Ascending aorta (tissue), 2 donors: ENCODE measurements at regions of chr3 and their contacts with region 1.

Region 1: DNA sequence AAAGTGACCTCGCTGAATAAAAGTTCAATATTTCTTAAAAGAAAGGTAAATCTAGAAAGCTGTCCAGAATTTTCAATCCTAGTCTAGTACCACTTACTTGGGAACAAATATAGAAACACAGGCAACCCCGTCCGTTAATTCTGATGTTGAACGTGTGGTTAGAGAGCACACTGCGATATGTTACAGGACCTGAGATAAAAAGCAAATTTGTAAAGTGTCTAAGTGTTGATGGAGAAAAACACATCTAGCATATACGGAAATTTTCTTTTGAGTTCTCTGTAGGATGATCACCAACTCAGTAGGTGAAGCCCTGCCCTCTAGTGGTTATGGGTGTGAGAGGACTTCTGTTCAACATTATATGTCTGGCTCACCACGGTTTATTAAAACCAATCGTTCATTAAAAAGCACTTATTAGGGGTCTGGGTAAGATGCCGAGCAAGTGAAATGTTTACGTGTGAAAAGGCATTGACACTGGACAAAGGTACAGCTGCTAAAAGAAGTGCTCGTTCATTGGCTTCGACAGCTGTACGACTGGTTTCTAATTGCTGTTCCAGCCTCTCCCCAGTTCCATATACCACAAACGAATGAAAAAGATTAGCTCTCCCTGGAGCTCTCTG is 1.0 kb upstream of the ATP2C1 start:
- DNase-seq: peak in 1 of 2 donors; percentile 82
- H3K4me3 ChIP-seq: peak overlapping the region; percentile 71 to 96
- H3K27ac ChIP-seq: peak overlapping the region; percentile 92 to 98
- H3K4me1 ChIP-seq: peaks cover 0 to 6% of the 10 kb centered on the region in 2 donors
- H3K27me3 ChIP-seq: no peaks in the 10 kb centered on the region
- CTCF ChIP-seq: peak; percentile 76 to 82 (median 76)

Region 2: GRCh38 chr3:130490241-130490640 is 402.6 kb before region 1 on chr3:
- intact Hi-C with region 1: no loop called
- DNase-seq: no peak
- H3K4me3 ChIP-seq: no peak overlapping the region
- H3K27ac ChIP-seq: no peak overlapping the region
- H3K4me1 ChIP-seq: no peaks in the 10 kb centered on the region
- H3K27me3 ChIP-seq: no peaks in the 10 kb centered on the region
- CTCF ChIP-seq: no peak

Region 3: GRCh38 chr3:130609166-130609979 is 283.5 kb before region 1 on chr3:
- intact Hi-C with region 1: no loop called
- DNase-seq: peak in 1 of 2 donors; percentile 65
- H3K4me3 ChIP-seq: no peak overlapping the region
- H3K27ac ChIP-seq: peak overlapping the region in 1 of 2 donors; percentile 53
- H3K4me1 ChIP-seq: peaks cover 0 to 2% of the 10 kb centered on the region in 2 donors
- H3K27me3 ChIP-seq: no peaks in the 10 kb centered on the region
- CTCF ChIP-seq: no peak

Region 4: DNA sequence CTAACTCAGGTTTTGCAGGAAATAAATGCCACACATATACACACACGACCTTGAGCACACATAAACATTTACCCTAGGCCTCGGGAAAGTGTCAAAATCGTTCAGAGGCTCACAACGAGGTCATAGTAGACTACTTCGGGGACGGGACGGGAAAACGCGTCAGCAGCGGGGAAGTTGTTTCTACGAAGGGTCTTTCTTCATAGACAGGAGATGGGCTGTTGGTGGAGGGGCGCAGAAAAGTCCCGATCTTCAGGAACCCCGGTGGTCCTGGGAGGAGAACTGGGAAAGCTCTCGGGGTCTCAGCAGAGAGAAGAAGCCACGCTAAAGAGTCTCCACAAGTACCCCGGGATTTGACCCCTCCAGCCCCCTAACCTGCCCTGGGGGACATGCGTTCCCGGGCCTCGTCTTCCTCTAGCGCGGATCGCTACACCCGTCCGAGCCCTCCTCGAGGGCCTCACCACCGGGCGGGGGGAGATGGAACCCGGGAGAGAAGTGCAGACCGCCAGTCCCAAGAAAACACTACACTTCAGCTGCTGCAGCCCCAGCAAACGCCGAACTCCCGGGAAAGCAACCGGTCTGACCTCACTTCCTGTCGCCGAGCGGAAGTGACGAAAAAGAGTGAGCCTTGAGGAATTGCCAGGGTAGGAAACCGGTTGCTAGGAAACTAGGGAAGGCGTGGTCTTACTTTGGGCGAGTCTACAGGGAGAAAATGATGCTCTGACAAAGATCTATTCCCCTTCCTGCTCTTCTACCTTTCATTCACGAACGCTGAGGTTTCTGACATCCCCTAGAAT is 146.4 kb before region 1 on chr3 and contains the start of gene PIK3R4:
- intact Hi-C with region 1: loop called (anchors 2 kb)
- DNase-seq: peak; percentile 93 to 98
- H3K4me3 ChIP-seq: peak within 1 kb of the TSS; percentile 83 to 95
- H3K27ac ChIP-seq: peak within 1 kb of the TSS; percentile 86 to 90
- H3K4me1 ChIP-seq: peaks cover 2 to 23% of the 10 kb centered on the region in 2 donors
- H3K27me3 ChIP-seq: no peaks in the 10 kb centered on the region
- CTCF ChIP-seq: no peak
- total RNA-seq, gene PIK3R4: 101 TPM

Region 5: DNA sequence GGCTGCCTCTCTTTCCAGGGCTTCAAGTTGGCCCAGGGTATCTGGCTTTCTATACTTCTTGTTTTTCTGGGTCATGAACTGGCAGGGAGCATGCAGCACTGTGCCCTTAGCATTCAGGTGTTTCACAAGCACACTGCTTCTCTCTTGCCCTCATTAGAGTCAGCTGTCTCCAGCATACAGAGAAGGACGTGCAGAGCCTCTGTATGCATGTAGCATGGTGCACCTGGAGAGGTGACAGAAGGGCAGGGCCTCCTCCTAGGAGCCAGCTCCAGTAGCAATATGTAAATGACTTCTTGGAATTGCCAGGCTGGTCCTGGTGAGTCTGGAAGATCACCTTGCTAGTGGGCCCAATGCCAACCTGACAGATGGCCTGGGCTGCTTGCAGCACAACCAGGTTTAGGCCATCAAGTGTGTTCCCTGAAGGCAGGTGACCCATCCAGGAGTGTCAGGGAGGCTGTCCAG is 43.7 kb before region 1 on chr3:
- intact Hi-C with region 1: no loop called
- DNase-seq: no peak
- H3K4me3 ChIP-seq: no peak overlapping the region
- H3K27ac ChIP-seq: no peak overlapping the region
- H3K4me1 ChIP-seq: no peaks in the 10 kb centered on the region
- H3K27me3 ChIP-seq: no peaks in the 10 kb centered on the region
- CTCF ChIP-seq: no peak

Region 6: GRCh38 chr3:131026321-131027178 is 133.7 kb after region 1 on chr3 and contains the starts of genes ASTE1 and NEK11:
- intact Hi-C with region 1: loop called (anchors 5 kb)
- DNase-seq: peak; percentile 69 to 94
- H3K4me3 ChIP-seq: peak within 1 kb of the TSS; percentile 72 to 83
- H3K27ac ChIP-seq: peak within 1 kb of the TSS; percentile 77 to 86
- H3K4me1 ChIP-seq: peaks cover 0 to 18% of the 10 kb centered on the region in 2 donors
- H3K27me3 ChIP-seq: no peaks in the 10 kb centered on the region
- CTCF ChIP-seq: no peak
- total RNA-seq, gene ASTE1: 14.0 TPM
- total RNA-seq, gene NEK11: 4.0 TPM

Region 7: DNA sequence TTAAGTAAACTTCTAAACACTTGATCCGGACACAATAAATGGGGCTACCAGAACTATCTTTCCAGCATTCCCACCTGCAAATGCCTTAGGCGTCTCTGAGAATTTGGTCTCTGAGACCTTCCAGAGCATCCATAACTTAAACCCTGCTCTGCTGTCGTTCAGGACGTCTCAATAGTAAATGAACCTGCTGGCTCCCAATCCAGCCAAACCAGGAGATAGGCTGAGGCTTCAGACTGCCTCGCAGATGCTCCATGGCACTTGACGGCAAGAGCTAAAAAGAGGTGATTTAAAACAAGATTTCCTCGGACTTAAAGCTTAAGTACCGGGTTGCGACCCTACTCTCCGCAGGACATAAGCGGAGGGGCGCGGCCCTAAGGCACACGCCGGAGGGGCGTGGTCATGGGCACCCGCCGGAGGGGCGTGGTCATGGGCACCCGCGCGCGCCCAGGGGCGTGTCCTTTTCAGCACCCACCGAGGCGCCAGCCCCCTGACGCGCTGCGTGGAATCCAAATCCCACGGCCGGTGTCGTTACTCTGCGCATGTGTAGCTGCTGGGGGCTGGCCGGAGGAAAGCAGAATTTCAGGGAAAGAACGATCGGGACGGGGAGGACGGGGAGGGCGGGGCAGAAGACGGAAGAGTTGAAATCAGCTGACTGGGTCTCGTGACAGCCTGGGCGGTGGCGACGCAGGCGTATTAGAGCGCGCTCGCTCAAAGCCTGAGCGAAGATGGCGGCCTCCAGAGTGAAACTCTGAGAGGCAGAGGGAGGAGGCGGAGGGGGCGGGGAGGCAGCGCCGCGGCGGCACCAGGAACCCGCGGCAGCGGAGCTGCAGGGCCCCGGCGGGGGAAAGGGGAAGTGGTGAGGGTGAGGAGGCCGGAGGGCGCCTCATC is 1524.2 kb after region 1 on chr3 and contains the start of gene DNAJC13:
- intact Hi-C with region 1: loop called (anchors 5 kb)
- DNase-seq: peak; percentile 73 to 96
- H3K4me3 ChIP-seq: peak within 1 kb of the TSS; percentile 79 to 98
- H3K27ac ChIP-seq: peak within 1 kb of the TSS; percentile 77 to 87
- H3K4me1 ChIP-seq: peaks cover 0 to 15% of the 10 kb centered on the region in 2 donors
- H3K27me3 ChIP-seq: no peaks in the 10 kb centered on the region
- CTCF ChIP-seq: no peak
- total RNA-seq, gene DNAJC13: 29.4 TPM